ENCODE measurements at regions of chr6 and their contacts with region 1.

Region 1: GRCh38 chr6:129730477-129731165 is 20.6 kb upstream of the ARHGAP18 start:
- DNase-seq: no peak
- ATAC-seq: peak; percentile 49
- H3K4me3 Mint-ChIP-seq: no peak overlapping the region
- H3K27ac Mint-ChIP-seq: no peak overlapping the region
- H3K4me1 Mint-ChIP-seq: no peaks in the 10 kb centered on the region
- H3K27me3 Mint-ChIP-seq: no peaks in the 10 kb centered on the region
- CTCF ChIP-seq: peak; percentile 69

Region 2: GRCh38 chr6:129598244-129599187 is 132.1 kb before region 1 on chr6:
- CTCF ChIA-PET with region 1: interaction called, 190 read pairs
- POLR2A ChIA-PET with region 1: no interaction called
- intact Hi-C with region 1: loop called (anchors 1 kb)
- DNase-seq: no peak
- ATAC-seq: peak; percentile 93
- H3K4me3 Mint-ChIP-seq: no peak overlapping the region
- H3K27ac Mint-ChIP-seq: no peak overlapping the region
- H3K4me1 Mint-ChIP-seq: peaks cover 5% of the 10 kb centered on the region
- H3K27me3 Mint-ChIP-seq: no peaks in the 10 kb centered on the region
- CTCF ChIP-seq: peak; percentile 53

Region 3: DNA sequence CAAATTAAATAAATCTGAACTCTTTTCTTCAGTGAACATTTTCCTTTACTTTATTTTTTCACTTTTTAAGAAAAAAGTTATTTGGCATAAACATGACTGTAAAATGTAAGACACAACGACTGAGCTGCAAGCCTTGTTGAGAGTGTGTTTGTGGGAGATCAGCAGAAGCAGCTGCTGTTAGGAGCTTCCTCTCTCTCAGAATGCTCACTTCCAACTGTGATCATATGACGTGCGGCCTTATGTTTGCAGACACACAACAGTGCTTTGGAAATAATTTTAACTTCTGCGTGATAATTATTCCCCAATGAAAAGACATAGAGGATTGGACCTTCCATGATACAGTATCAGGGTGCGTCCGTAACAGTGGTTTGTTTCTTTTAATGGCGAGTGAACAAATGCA is 124.7 kb before region 1 on chr6:
- CTCF ChIA-PET with region 1: interaction called, 21 read pairs
- POLR2A ChIA-PET with region 1: no interaction called
- intact Hi-C with region 1: no loop called
- DNase-seq: no peak
- ATAC-seq: no peak
- H3K4me3 Mint-ChIP-seq: no peak overlapping the region
- H3K27ac Mint-ChIP-seq: no peak overlapping the region
- H3K4me1 Mint-ChIP-seq: no peaks in the 10 kb centered on the region
- H3K27me3 Mint-ChIP-seq: no peaks in the 10 kb centered on the region
- CTCF ChIP-seq: no peak

Region 4: DNA sequence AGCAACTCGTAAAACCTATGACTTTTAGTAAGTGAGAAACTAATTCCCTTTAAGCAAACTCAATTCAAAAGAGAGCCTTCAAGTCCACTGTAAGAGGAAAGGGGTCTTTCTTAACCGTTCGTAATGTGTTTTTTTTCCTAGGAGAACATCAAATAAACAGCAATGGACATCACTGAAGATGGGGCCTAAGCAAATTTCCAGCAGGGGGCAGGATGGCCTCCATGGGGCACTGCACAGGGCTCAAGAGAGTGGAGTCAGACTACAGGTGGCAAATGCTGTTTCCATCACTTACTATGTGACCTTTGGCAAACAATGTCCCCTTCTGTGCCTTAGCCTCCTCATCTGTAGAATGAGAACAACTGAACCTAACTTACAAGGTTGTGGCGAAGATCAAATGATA is 109.4 kb before region 1 on chr6:
- CTCF ChIA-PET with region 1: interaction called, 15 read pairs
- POLR2A ChIA-PET with region 1: no interaction called
- intact Hi-C with region 1: loop called (anchors 1 kb)
- DNase-seq: no peak
- ATAC-seq: peak; percentile 71
- H3K4me3 Mint-ChIP-seq: no peak overlapping the region
- H3K27ac Mint-ChIP-seq: no peak overlapping the region
- H3K4me1 Mint-ChIP-seq: no peaks in the 10 kb centered on the region
- H3K27me3 Mint-ChIP-seq: no peaks in the 10 kb centered on the region
- CTCF ChIP-seq: no peak

Region 5: GRCh38 chr6:129748212-129748900 is 17.7 kb after region 1 on chr6:
- CTCF ChIA-PET with region 1: interaction called, 32 read pairs
- POLR2A ChIA-PET with region 1: interaction called, 4 read pairs
- intact Hi-C with region 1: no loop called
- DNase-seq: no peak
- ATAC-seq: peak; percentile 89
- H3K4me3 Mint-ChIP-seq: peak overlapping the region; percentile 66
- H3K27ac Mint-ChIP-seq: peak overlapping the region; percentile 94
- H3K4me1 Mint-ChIP-seq: peaks cover 50% of the 10 kb centered on the region
- H3K27me3 Mint-ChIP-seq: no peaks in the 10 kb centered on the region
- CTCF ChIP-seq: no peak

Region 6: GRCh38 chr6:129812145-129812777 is 81.6 kb after region 1 on chr6:
- CTCF ChIA-PET with region 1: no interaction called
- POLR2A ChIA-PET with region 1: no interaction called
- intact Hi-C with region 1: no loop called
- DNase-seq: no peak
- ATAC-seq: no peak
- H3K4me3 Mint-ChIP-seq: no peak overlapping the region
- H3K27ac Mint-ChIP-seq: no peak overlapping the region
- H3K4me1 Mint-ChIP-seq: no peaks in the 10 kb centered on the region
- H3K27me3 Mint-ChIP-seq: peaks cover 5% of the 10 kb centered on the region
- CTCF ChIP-seq: no peak

Region 7: GRCh38 chr6:129936329-129937165 is 205.9 kb after region 1 on chr6:
- CTCF ChIA-PET with region 1: interaction called, 4 read pairs
- POLR2A ChIA-PET with region 1: no interaction called
- intact Hi-C with region 1: loop called (anchors 1 kb)
- DNase-seq: no peak
- ATAC-seq: peak; percentile 50
- H3K4me3 Mint-ChIP-seq: no peak overlapping the region
- H3K27ac Mint-ChIP-seq: no peak overlapping the region
- H3K4me1 Mint-ChIP-seq: peaks cover 4% of the 10 kb centered on the region
- H3K27me3 Mint-ChIP-seq: peaks cover 18% of the 10 kb centered on the region
- CTCF ChIP-seq: peak; percentile 42

Measured in activated B cell treated with CpG ODN at 0.5 μM for 24 hours (primary cell).